Activated CD4-positive, alpha-beta T cell treated with anti-CD3 and anti-CD28 coated beads for 36 hours (primary cell): ENCODE measurements at regions of chr6 and their contacts with region 1.

Region 1: DNA sequence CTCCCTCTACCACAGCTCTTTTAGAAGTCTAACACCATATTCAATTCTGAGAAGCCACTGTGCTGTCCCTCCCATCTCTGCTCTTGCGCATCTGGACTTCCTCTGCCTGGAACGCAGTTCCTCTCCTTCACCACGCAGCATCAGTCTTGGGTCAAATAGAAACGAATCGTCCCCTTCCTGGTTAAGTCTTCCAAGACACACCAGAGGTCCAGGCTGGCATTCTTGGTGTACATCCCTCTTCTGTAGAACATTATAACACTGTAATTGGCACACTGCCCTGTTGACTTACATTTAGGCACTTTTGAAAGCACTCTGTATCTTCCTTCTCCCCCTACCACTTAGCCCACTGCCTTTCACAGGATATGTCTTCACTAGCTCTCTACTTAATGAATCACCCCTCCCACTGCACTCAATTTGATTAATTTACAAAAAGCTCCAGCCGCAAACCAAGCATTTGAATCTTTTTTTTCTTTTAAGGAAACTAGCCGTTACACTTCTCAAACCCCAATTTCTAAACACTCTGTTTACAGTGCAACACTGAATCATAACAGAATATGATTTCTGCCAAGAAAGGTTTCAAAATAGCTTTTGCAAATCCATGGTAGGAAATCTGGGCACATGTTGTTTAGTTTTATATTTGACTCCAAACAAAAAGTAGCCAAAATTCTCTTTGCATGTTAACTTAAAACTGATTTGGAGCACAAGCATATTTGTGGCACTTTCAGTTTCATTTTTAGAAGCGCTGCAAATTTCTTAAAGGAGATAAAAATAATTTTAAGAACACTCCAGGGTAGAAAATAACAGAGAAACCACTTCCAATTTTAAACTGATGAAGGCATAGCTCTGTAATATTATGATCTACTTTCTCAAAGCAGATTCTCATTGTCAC is 140.7 kb upstream of the CARMIL1 start:
- DNase-seq: peak; percentile 81
- ATAC-seq: peak; percentile 93
- H3K4me3 Mint-ChIP-seq: peak overlapping the region; percentile 81
- H3K27ac Mint-ChIP-seq: peak overlapping the region; percentile 97
- H3K4me1 Mint-ChIP-seq: peaks cover 31% of the 10 kb centered on the region
- H3K27me3 Mint-ChIP-seq: no peaks in the 10 kb centered on the region

Region 2: DNA sequence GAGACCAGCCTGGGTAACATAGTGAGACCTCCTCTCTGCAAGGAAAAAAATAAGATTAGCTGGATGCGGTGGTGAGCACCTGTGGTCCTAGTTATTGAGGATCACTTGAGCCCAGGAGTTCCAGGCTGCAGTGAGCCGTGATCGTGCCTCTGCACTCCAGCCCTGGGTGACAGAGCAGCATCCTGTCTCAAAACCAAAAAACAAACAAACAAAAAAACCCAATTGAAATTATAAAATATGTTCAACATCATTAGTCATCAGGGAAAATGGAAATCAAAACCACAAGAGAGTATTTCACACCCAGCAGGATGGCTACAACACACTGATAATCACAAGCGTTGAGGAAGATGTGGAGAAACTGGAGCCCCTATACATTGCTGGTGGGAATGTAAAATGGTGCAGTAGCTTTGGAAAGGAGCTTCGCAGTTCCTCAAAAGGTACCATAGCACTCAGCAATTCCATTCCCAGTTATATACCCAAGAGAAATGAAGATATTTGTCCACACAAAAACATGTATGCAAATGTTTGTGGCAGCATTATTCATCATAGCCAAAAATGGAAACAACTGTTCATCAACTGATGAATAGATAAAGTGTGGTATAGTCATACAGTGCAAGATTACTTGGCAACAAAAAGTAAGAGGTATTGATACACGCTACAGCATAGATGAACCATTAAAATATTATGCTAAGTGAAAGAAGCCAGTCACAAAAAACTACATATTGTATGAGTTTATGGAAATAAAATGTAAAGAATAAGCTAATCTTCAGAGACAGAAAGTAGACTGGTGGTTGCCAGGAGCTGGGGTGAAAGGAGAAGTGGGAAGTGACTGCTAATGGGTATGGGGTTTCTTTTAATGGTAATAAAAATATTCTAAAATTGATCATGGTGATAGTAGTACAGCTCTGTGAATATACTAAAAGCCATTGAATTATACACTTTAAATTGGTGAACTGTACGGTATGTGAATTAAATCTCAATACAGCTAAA is 164.0 kb before region 1 on chr6:
- CTCF ChIA-PET with region 1: no interaction called
- POLR2A ChIA-PET with region 1: interaction called, 6 read pairs
- intact Hi-C with region 1: loop called in 1 of 2 experiments (anchors 1 kb)
- DNase-seq: peak; percentile 60
- ATAC-seq: peak; percentile 92
- H3K4me3 Mint-ChIP-seq: peak overlapping the region; percentile 33
- H3K27ac Mint-ChIP-seq: peak overlapping the region; percentile 86
- H3K4me1 Mint-ChIP-seq: peaks cover 59% of the 10 kb centered on the region
- H3K27me3 Mint-ChIP-seq: no peaks in the 10 kb centered on the region

Region 3: GRCh38 chr6:25166955-25167748 is 28.7 kb after region 1 on chr6:
- CTCF ChIA-PET with region 1: interaction called, 3 read pairs
- POLR2A ChIA-PET with region 1: no interaction called
- intact Hi-C with region 1: loop called (anchors 1 to 2 kb)
- DNase-seq: no peak
- ATAC-seq: no peak
- H3K4me3 Mint-ChIP-seq: no peak overlapping the region
- H3K27ac Mint-ChIP-seq: peak overlapping the region; percentile 69
- H3K4me1 Mint-ChIP-seq: peaks cover 48% of the 10 kb centered on the region
- H3K27me3 Mint-ChIP-seq: peaks cover 4% of the 10 kb centered on the region

Region 4: GRCh38 chr6:25217302-25217701 is 78.8 kb after region 1 on chr6:
- CTCF ChIA-PET with region 1: no interaction called
- POLR2A ChIA-PET with region 1: no interaction called
- intact Hi-C with region 1: no loop called
- DNase-seq: no peak
- ATAC-seq: no peak
- H3K4me3 Mint-ChIP-seq: no peak overlapping the region
- H3K27ac Mint-ChIP-seq: no peak overlapping the region
- H3K4me1 Mint-ChIP-seq: no peaks in the 10 kb centered on the region
- H3K27me3 Mint-ChIP-seq: no peaks in the 10 kb centered on the region

Region 5: DNA sequence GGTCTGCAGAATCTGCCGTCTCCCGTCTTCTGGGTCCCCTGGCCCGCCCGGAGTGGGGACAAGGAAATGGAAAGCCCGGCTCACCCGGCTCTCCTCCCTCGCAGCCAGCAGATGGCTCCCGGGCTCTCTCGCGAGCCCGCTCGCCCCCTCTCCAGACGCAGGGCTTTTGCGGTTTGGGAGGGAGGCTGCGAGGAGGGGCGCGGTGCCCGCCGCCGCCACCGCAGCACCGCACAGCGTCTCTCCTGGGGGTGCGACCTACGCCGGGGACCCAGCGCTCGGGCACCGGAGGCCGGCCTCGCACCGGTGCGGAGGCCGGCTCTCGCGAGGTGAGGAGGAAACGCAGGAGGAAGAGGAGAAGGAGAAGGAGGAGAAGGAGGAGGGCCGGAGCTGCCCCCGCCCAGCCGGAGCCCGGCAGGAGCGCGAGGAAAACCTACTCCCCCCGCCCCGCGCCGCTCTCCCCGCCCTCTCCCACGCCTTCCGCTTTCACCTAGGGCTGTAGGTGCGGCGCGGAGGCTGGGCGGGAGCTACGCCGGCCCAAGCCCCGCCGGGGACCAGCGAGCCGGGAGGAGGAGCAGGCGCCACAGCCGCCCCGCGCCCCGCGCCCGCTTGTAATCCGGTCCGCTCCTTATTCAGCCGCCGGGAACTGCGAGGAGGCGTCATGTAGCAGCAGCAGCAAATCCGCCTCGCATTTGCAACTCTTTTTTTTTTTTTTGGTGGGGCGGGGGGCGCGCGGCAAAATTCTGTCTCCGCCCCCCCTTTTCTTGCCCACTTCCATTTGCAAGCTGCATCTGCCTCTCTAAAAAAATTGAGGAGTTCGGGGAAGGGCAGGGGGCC is 140.7 kb after region 1 on chr6 and contains the start of gene CARMIL1:
- CTCF ChIA-PET with region 1: no interaction called
- POLR2A ChIA-PET with region 1: no interaction called
- intact Hi-C with region 1: loop called in 1 of 2 experiments (anchors 1 kb)
- DNase-seq: peak; percentile 82
- ATAC-seq: peak; percentile 75
- H3K4me3 Mint-ChIP-seq: peak within 1 kb of the TSS; percentile 82
- H3K27ac Mint-ChIP-seq: peak within 1 kb of the TSS; percentile 79
- H3K4me1 Mint-ChIP-seq: peaks cover 38% of the 10 kb centered on the region
- H3K27me3 Mint-ChIP-seq: peaks cover 5% of the 10 kb centered on the region
- total RNA-seq, gene CARMIL1: 4.5 to 4.9 TPM

Region 6: GRCh38 chr6:25962149-25963127 is 824.0 kb after region 1 on chr6 and contains the start of gene TRIM38:
- CTCF ChIA-PET with region 1: no interaction called
- POLR2A ChIA-PET with region 1: no interaction called
- intact Hi-C with region 1: loop called (anchors 1 to 5 kb)
- DNase-seq: peak; percentile 82
- ATAC-seq: peak; percentile 80
- H3K4me3 Mint-ChIP-seq: peak within 1 kb of the TSS; percentile 96
- H3K27ac Mint-ChIP-seq: peak within 1 kb of the TSS; percentile 100
- H3K4me1 Mint-ChIP-seq: peaks cover 74% of the 10 kb centered on the region
- H3K27me3 Mint-ChIP-seq: no peaks in the 10 kb centered on the region
- total RNA-seq, gene TRIM38: 24.9 TPM